ENCODE measurements at regions of chr20 and their contacts with region 1.

Region 1: GRCh38 chr20:2093159-2093781 is 8.4 kb upstream of the STK35 start:
- ATAC-seq: peak in 3 of 8 experiments; percentile 21 to 56 (median 30)
- H3K4me3 ChIP-seq: no peak overlapping the region
- H3K27ac ChIP-seq: no peak overlapping the region
- H3K4me1 ChIP-seq: no peaks in the 10 kb centered on the region

Region 2: DNA sequence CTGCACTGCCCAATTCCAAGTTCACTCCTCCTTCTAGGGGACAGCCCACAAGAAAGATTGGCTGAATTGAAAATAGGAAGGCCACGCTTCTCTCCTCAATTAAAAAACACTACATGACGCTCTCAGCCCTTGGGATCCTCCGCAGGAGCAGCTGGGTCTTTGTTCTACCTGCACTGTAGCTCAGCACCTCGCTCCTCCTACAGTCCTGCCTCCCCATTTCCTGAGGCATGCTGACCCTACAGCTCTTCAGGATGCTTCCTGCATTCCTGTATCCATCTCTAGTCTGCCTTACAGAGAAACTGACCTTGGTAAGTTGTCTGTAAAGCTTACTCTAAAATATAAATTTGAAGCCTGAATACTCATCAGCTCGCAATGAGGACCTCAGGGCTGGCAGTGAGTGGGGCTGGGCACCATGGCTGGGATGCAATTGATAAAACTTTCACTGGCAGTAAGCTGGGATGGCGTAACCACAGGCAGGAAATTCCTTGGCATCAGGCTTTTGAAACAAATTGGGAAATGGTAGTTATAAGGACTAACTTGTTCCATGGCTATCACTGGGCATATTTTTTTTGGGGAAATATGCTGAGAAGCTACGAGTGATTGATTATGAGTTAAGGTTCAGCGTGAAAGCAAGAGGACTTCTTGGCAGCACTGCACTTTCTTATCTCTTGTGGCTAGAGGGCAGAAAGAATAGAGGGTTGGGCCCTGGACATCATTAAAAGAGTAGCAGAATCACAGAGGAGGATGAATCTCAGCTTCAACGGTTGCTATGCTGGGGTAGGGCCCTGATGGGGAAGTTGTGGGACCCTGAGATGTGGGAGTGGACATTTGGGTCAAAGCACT is 461.7 kb before region 1 on chr20:
- in situ Hi-C with region 1: loop called in 1 of 9 experiments (anchors 25 kb)
- ATAC-seq: no peak
- H3K4me3 ChIP-seq: no peak overlapping the region
- H3K27ac ChIP-seq: no peak overlapping the region
- H3K4me1 ChIP-seq: no peaks in the 10 kb centered on the region

Region 3: DNA sequence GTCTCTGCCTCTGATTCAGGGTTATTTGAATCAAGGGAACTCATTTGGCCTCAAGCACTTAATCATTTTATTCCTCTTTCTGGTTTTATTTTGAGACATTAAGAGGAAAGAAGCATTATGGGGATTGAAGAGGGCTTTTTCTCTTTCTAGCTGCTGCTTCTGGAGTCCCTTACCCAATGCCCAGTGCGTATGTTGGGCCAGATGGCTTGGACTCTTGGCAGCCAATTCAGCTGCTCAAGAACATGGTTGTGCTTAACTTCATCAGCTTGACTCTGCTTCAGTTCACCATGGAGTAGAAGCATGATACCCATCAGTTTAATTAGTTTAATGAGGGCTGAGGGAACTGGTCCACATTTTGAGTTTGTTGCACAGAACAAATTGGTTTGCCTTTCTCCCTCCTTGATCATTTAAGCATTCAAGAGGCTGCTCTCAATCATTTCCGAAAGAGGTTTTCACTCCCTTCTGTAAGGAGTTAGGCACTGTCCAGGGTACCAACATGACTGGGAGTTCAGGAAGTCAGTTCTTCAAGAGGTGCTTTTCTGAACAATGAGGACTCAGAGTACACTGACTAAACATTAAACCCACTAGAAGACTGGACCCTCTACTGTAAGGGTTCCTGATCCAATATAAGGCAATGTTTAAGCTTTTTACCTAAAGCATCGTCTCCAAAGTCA is 114.0 kb before region 1 on chr20:
- in situ Hi-C with region 1: loop called in 1 of 9 experiments (anchors 10 kb)
- ATAC-seq: no peak
- H3K4me3 ChIP-seq: no peak overlapping the region
- H3K27ac ChIP-seq: no peak overlapping the region
- H3K4me1 ChIP-seq: peaks cover 0 to 2% of the 10 kb centered on the region in 2 donors

Region 4: GRCh38 chr20:2022163-2022562 is 71.1 kb before region 1 on chr20:
- in situ Hi-C with region 1: no loop called
- ATAC-seq: no peak
- H3K4me3 ChIP-seq: no peak overlapping the region
- H3K27ac ChIP-seq: no peak overlapping the region
- H3K4me1 ChIP-seq: no peaks in the 10 kb centered on the region

Measured in motor neuron (in vitro differentiated cells).